CD4-positive, alpha-beta T cell (primary cell): ENCODE measurements at regions of chr5 and their contacts with region 1.

Region 1: GRCh38 chr5:15283076-15283475 is 216.9 kb upstream of the FBXL7 start:
- DNase-seq: no peak
- ATAC-seq: no peak
- H3K4me3 ChIP-seq: no peak overlapping the region
- H3K4me3 Mint-ChIP-seq: no peak overlapping the region
- H3K27ac ChIP-seq: no peak overlapping the region
- H3K27ac Mint-ChIP-seq: no peak overlapping the region
- H3K4me1 ChIP-seq: no peaks in the 10 kb centered on the region
- H3K4me1 Mint-ChIP-seq: no peaks in the 10 kb centered on the region
- H3K27me3 ChIP-seq: no peaks in the 10 kb centered on the region
- H3K27me3 Mint-ChIP-seq: no peaks in the 10 kb centered on the region
- CTCF ChIP-seq: no peak

Region 2: DNA sequence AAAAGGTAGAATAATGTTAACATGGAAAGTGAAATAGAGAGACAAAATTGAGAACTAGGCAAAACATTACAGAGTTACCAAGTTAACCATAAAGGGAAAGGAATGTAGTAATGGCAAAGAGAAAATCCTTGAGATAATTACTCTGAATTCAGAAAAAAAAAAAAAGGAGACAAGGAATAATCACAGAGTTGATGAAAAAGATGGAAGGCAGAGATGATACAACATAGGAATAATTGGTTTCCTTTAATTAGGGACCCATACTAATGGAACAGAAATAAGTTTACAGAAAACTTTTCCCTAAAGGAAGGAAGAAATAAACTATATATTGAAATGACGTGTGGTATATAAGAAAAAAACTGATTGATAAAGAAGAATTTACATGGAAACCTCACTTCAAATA is 37.2 kb before region 1 on chr5:
- CTCF ChIA-PET with region 1: no interaction called
- POLR2A ChIA-PET with region 1: no interaction called
- intact Hi-C with region 1: loop called in 1 of 2 experiments (anchors 1 kb)
- DNase-seq: no peak
- ATAC-seq: no peak
- H3K4me3 ChIP-seq: no peak overlapping the region
- H3K4me3 Mint-ChIP-seq: no peak overlapping the region
- H3K27ac ChIP-seq: no peak overlapping the region
- H3K27ac Mint-ChIP-seq: no peak overlapping the region
- H3K4me1 ChIP-seq: no peaks in the 10 kb centered on the region
- H3K4me1 Mint-ChIP-seq: no peaks in the 10 kb centered on the region
- H3K27me3 ChIP-seq: no peaks in the 10 kb centered on the region
- H3K27me3 Mint-ChIP-seq: no peaks in the 10 kb centered on the region
- CTCF ChIP-seq: no peak

Region 3: GRCh38 chr5:15334551-15335266 is 51.6 kb after region 1 on chr5:
- CTCF ChIA-PET with region 1: no interaction called
- POLR2A ChIA-PET with region 1: no interaction called
- intact Hi-C with region 1: no loop called
- DNase-seq: no peak
- ATAC-seq: no peak
- H3K4me3 ChIP-seq: no peak overlapping the region
- H3K4me3 Mint-ChIP-seq: no peak overlapping the region
- H3K27ac ChIP-seq: no peak overlapping the region
- H3K27ac Mint-ChIP-seq: no peak overlapping the region
- H3K4me1 ChIP-seq: no peaks in the 10 kb centered on the region
- H3K4me1 Mint-ChIP-seq: no peaks in the 10 kb centered on the region
- H3K27me3 ChIP-seq: no peaks in the 10 kb centered on the region
- H3K27me3 Mint-ChIP-seq: no peaks in the 10 kb centered on the region
- CTCF ChIP-seq: no peak